Astrocyte of the cerebellum (primary cell): ENCODE measurements at regions of chr11 and their contacts with region 1.

Region 1: DNA sequence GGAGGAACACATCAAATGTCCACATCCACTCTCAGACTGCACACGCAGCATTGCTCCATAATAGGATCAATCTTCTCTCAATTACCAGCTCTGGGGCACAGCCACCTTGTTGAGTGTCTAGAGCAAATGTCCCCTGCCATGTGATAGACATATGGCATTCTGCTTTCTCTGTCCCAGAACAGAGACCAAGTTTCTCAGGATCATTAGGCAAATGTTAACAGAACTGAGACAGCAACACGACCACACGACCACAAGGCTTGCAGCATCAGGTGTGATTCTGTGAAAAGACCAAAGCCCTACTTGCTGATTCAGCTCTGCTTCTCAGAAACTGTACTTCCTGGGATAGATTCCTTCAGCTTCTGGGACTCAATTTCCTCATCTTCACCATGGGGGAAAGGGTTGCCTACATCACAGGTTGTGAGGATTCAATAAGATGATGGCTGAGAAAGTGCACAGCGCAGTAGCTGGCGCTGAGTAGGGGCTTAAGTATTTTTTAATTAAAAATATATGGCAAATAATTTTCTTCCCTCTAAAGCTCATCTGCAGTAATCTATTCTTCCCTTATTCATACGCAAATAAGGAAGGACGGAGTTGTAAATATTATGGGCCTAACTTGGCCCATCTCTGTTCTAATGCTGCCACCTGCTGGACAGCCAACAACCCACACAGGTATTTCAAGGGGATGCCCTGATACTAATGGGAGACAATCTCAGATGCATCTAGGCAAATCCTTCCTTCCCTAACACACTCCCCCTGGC is 54.3 kb upstream of the USP47 start:
- DNase-seq: peak; percentile 64
- H3K4me3 ChIP-seq: no peak overlapping the region
- CTCF ChIP-seq: peak; percentile 88

Region 2: GRCh38 chr11:10792398-10792975 is 995.0 kb before region 1 on chr11:
- in situ Hi-C with region 1: loop called (anchors 25 kb)
- DNase-seq: no peak
- H3K4me3 ChIP-seq: no peak overlapping the region
- CTCF ChIP-seq: peak; percentile 92

Region 3: GRCh38 chr11:11036848-11037732 is 750.4 kb before region 1 on chr11:
- in situ Hi-C with region 1: loop called (anchors 5 kb)
- DNase-seq: peak; percentile 71
- H3K4me3 ChIP-seq: no peak overlapping the region
- CTCF ChIP-seq: peak; percentile 81

Region 4: GRCh38 chr11:11722861-11723260 is 64.6 kb before region 1 on chr11:
- in situ Hi-C with region 1: no loop called
- DNase-seq: no peak
- H3K4me3 ChIP-seq: no peak overlapping the region
- CTCF ChIP-seq: no peak

Region 5: DNA sequence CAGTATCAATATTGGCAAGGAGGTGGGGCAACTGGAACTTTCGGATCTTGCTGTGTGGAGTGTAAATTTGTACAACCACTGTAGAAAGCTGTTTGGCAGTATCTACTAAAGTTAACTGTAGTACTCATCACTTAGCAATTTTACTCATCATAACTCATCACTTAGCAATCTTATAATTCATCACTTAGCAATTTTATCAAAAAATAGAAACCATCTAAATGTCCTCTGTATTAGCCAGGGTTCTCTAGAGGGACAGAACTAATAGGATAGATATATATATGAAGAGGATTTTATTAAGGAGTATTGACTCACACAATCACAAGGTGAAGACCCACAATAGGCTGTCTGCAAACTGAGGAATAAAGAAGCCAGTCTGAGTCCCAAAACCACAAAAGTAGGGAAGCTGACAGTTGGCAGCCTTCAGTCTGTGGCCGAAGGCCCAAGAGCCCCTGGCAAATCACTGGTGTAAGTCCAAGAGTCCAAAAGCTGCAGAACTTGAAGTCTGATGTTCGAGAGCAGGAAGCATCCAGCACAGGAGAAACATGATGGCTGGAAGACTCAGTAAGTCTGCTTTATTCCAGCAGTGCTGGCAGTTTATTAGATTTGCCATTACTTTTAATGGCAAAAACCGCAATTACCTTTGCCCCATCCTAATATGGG is 38.6 kb before region 1 on chr11:
- in situ Hi-C with region 1: no loop called
- DNase-seq: no peak
- H3K4me3 ChIP-seq: no peak overlapping the region
- CTCF ChIP-seq: no peak